Gastrocnemius medialis (tissue), 4 donors: ENCODE measurements at regions of chr17 and their contacts with region 1.

Region 1: DNA sequence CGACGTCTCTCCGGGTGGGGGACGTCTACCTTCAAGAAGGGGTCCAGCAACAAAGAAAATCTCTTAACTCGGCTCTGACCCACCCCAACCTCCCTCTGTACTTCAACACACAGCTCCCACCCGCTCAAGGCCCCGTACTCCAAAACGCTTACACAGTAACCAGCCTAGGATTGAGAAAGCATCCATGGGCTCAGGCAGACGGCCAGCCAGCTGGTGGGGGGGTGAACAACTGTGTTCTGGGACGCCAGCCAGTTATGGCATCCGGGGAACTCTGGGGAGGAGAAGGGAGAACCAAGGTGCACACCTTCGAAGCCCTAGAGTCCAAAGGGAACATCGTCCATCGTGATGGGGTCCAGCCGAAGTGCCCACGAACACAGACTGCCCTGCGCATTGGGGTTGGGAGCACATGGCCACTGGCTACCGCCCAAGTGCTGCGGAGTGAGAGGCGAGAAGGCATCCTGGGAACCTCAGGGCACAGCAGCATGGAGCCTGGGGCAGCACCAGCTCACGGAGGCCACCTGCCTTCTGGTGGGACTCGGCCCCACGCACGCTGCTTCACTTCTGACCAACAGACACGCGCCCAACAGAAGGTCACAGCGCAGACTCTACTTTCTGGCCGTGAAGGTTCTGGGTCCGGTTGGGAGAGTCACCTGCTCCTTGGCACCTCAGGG is 14.3 kb downstream of the SLC16A3 start:
- DNase-seq: peak; percentile 84 to 94
- ATAC-seq: peak; percentile 40 to 47
- H3K4me3 ChIP-seq: peak overlapping the region in 2 of 4 donors; percentile 11 to 13
- H3K27ac ChIP-seq: peak overlapping the region; percentile 90 to 98 (median 93)
- H3K4me1 ChIP-seq: peaks cover 75 to 79% of the 10 kb centered on the region in 2 donors
- H3K27me3 ChIP-seq: no peaks in the 10 kb centered on the region
- CTCF ChIP-seq: no peak
- POLR2A ChIP-seq: peak in 1 of 2 donors; percentile 2

Region 2: DNA sequence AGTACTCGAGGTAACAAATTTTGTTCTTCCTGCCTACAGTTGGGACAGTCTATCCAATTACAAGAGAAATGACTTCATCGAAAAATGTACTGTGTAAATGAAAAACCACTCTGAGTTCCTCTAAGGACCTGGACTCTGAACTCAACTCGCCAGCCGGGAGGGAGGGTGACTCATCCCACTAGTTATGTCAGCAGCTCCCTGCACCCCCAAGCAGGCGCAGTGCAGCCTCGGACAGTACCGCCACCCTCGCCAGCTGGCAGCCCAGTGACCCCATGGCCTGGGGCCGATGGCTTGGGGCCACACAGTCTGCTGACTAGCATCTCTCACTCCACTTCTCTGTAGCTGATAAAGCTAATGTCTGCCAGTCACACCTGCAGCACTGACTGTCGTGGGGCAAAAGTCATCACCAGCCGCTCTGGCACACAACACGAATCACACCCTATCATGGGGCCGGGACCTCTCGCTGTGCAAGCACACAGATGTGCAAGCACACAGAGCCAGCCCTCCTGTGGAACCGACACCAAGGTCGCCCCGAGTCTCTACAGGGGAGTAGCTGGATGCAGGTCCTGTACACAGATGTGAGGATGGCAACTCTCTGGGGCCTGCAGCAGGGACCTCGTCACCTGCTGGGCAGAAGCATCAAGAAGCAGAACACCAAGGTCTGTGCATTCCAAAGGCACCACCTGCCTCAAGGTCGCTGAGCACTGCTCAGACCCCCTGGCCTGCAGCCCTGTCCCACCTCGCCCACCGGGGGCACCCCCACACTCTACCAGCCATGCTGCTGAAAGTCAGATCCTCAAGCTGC is 24.7 kb after region 1 on chr17:
- in situ Hi-C with region 1: no loop called
- intact Hi-C with region 1: loop called (anchors 2 kb)
- DNase-seq: peak; percentile 98 to 99
- ATAC-seq: peak; percentile 89 to 91
- H3K4me3 ChIP-seq: peak overlapping the region; percentile 5 to 37 (median 22)
- H3K27ac ChIP-seq: peak overlapping the region; percentile 99 to 100 (median 100)
- H3K4me1 ChIP-seq: peaks cover 61 to 63% of the 10 kb centered on the region in 2 donors
- H3K27me3 ChIP-seq: no peaks in the 10 kb centered on the region
- CTCF ChIP-seq: peak in 1 of 5 experiments; percentile 9
- POLR2A ChIP-seq: peak; percentile 13 to 49

Region 3: GRCh38 chr17:82292251-82293154 is 49.4 kb after region 1 on chr17:
- in situ Hi-C with region 1: no loop called
- intact Hi-C with region 1: loop called (anchors 1 kb)
- DNase-seq: peak; percentile 98 to 99
- ATAC-seq: peak; percentile 81 to 87
- H3K4me3 ChIP-seq: peak overlapping the region; percentile 78 to 97 (median 91)
- H3K27ac ChIP-seq: peak overlapping the region; percentile 98 to 99 (median 98)
- H3K4me1 ChIP-seq: peaks cover 44 to 48% of the 10 kb centered on the region in 2 donors
- H3K27me3 ChIP-seq: no peaks in the 10 kb centered on the region
- CTCF ChIP-seq: peak in 1 of 5 experiments; percentile 14
- POLR2A ChIP-seq: peak; percentile 99 to 100

Region 4: DNA sequence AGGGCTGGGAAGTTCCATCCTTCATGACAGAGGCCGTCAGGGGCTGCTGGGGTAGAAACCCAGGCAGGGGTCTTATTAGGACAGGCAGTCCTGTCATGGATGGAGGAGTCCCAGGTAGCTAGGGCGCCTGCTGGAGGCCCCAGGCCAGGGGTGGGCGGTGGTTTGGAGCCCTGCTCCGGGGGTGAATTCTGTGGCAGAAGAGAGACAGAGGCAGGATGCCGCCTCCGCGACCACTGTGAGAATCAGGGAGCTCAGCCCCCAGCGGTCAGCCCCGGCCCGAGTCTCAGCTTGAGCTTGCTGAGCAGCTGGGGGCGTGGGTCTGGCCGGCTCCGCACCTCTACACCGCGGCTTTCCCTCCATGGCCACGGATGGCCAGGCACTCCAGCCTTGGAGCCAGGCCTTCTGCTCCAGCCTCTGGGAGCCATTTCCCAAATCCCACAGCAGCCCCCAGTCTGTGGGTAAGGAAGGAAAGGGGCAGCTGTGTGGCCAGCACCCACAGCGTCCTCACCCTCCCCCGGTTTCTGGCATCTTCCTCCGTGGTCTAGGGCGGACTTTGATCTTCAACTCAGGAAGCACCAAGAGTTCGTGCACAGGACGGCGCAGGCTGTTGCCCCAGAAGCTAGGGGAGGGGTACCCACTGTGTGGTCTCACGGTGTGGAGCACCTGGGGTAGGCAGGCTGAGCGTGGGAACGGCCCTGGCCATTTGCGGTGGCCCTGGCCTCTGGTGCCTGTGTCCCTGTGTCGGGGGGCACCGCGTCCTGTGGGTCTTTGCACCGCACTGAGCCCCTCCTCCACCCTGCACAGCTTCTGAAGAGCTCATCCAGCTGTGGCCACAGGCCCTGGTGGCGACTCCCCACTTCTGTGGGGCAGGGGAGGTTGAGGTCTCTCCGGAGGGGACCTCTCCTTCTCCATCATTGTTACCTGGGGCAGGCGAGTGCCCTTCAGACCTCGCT is 60.2 kb after region 1 on chr17:
- in situ Hi-C with region 1: no loop called
- intact Hi-C with region 1: no loop called
- DNase-seq: no peak
- ATAC-seq: no peak
- H3K4me3 ChIP-seq: no peak overlapping the region
- H3K27ac ChIP-seq: no peak overlapping the region
- H3K4me1 ChIP-seq: peaks cover 5 to 9% of the 10 kb centered on the region in 2 donors
- H3K27me3 ChIP-seq: no peaks in the 10 kb centered on the region
- CTCF ChIP-seq: no peak
- POLR2A ChIP-seq: no peak